T-cell (primary cell): ENCODE measurements at regions of chr14 and their contacts with region 1.

Region 1: DNA sequence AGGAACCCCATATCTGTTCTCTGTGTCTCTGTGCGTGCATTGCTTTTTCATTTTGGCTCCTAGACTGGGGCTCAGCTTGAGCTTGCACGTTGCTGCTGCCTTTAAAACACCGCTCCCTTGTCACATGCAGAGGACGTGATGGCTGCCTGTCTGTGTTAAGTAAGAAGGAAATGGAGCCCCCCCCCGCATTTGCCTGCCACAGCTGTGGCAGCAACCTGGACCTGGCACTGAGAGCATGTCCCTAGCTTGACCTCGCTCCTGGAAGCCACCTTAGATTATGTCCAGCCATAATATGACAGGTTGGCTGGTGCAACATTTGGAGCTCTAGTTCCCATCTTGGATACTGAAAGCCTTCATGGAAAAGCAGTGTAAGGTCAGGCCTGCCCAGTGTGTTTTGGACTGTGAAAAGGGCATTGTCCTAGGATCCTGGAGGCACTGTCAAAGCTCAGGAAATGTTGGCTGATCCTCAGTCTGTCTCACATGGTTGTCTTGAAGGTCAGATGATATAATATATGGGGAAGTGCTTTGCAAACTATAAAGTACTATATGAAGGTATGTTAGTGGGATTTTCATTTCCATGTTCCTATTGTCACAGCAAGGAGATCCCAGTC is 73.8 kb downstream of the PRKCH start:
- DNase-seq: peak in 19 of 35 experiments; percentile 16 to 55 (median 35)
- ATAC-seq: peak; percentile 20 to 58 (median 46)
- H3K4me3 ChIP-seq: no peak overlapping the region
- H3K4me3 Mint-ChIP-seq: peak overlapping the region in 1 of 3 donors; percentile 71
- H3K27ac ChIP-seq: peak overlapping the region; percentile 60
- H3K27ac Mint-ChIP-seq: peak overlapping the region; percentile 84 to 95
- H3K4me1 ChIP-seq: peaks cover 53 to 77% of the 10 kb centered on the region in 2 experiments
- H3K4me1 Mint-ChIP-seq: peaks cover 0 to 61% (median 41%) of the 10 kb centered on the region in 3 donors
- H3K27me3 ChIP-seq: no peaks in the 10 kb centered on the region
- H3K27me3 Mint-ChIP-seq: no peaks in the 10 kb centered on the region

Region 2: GRCh38 chr14:61347826-61348443 is 47.3 kb before region 1 on chr14:
- CTCF ChIA-PET with region 1: interaction called, 3 to 5 read pairs
- POLR2A ChIA-PET with region 1: interaction called in 1 of 2 experiments, 11 read pairs
- DNase-seq: peak in 1 of 35 experiments; percentile 42
- ATAC-seq: no peak
- H3K4me3 ChIP-seq: peak overlapping the region; percentile 0 to 20
- H3K4me3 Mint-ChIP-seq: peak overlapping the region; percentile 74 to 83 (median 75)
- H3K27ac ChIP-seq: peak overlapping the region; percentile 81
- H3K27ac Mint-ChIP-seq: peak overlapping the region; percentile 96 to 100
- H3K4me1 ChIP-seq: peaks cover 87 to 91% of the 10 kb centered on the region in 2 experiments
- H3K4me1 Mint-ChIP-seq: peaks cover 3 to 99% (median 99%) of the 10 kb centered on the region in 3 donors
- H3K27me3 ChIP-seq: no peaks in the 10 kb centered on the region
- H3K27me3 Mint-ChIP-seq: no peaks in the 10 kb centered on the region

Region 3: DNA sequence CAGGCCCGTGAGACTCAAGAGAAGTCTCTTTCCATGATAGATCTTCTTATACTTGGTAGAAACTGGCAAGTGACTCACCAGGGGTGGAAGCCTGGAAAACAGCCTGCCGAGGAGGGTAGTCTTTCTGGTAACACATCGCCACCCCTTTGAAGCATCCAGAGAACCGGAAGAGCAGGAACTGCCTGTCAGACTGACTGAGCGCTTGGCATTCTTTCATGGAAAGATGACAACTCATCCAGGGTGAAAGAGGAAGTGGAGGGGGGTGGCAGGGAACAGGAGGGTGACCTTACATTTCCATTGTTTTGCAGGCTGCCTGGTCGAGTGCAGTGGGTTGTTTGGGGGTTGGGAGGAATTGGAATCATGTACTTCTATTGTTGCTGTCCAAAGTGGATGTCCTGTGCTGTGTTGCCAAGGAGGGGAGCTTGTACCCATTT is 39.3 kb before region 1 on chr14:
- CTCF ChIA-PET with region 1: interaction called in 1 of 2 experiments, 3 read pairs
- POLR2A ChIA-PET with region 1: interaction called in 1 of 2 experiments, 10 read pairs
- DNase-seq: peak in 4 of 35 experiments; percentile 26 to 62 (median 40)
- ATAC-seq: peak in 3 of 4 experiments; percentile 37 to 56 (median 45)
- H3K4me3 ChIP-seq: peak overlapping the region in 1 of 2 donors; percentile 2
- H3K4me3 Mint-ChIP-seq: peak overlapping the region; percentile 40 to 67 (median 41)
- H3K27ac ChIP-seq: peak overlapping the region; percentile 0
- H3K27ac Mint-ChIP-seq: peak overlapping the region; percentile 77 to 87
- H3K4me1 ChIP-seq: peaks cover 67 to 80% of the 10 kb centered on the region in 2 experiments
- H3K4me1 Mint-ChIP-seq: peaks cover 0 to 97% (median 96%) of the 10 kb centered on the region in 3 donors
- H3K27me3 ChIP-seq: no peaks in the 10 kb centered on the region
- H3K27me3 Mint-ChIP-seq: no peaks in the 10 kb centered on the region